Endothelial cell of umbilical vein (primary cell): ENCODE measurements at regions of chr14 and their contacts with region 1.

Region 1: DNA sequence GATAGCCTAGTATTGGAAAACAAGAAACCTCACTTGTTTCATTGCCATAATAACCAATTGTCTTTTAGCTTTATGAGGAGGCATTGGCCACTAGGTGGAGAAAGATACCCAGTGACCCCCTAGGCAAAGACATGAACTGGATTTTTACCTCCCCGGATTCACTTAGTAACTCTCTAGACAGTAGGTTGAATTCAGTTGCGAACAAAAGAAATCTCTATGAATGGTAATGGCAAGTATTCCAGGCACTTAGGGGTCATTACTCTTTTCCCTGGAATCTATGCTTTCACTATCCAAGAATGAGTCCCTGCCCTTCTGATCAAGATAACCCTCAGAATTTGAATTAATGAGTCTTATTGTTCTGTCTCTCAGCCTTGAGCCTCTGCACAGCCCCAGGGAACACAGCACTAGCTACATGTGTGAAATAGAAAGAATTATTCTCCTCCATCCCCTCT is 29.5 kb upstream of the RHOJ start:
- DNase-seq: peak; percentile 96
- H3K4me3 ChIP-seq: peak overlapping the region in 1 of 3 experiments; percentile 45
- H3K27ac ChIP-seq: peak overlapping the region; percentile 72
- H3K4me1 ChIP-seq: peaks cover 29% of the 10 kb centered on the region
- H3K27me3 ChIP-seq: no peaks in the 10 kb centered on the region
- CTCF ChIP-seq: peak; percentile 60 to 67
- POLR2A ChIP-seq: no peak

Region 2: DNA sequence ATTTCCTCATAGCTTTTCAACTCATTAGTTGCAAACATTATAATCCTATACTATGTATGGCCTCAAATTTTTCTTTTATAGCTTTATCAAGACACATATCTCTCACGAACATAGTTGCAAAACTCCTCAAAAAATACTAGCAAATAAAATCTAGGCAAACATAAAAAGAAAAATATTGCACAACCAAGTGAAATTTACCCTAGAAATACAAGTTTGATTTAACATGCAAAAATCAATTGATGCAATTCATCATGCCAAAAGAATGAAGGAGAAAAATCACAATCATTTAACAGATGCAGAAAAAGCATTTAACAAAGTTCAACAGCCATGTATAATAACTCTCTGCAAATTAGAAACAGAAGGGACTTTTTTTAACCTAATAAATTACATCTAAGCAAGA is 96.2 kb before region 1 on chr14:
- CTCF ChIA-PET with region 1: no interaction called
- POLR2A ChIA-PET with region 1: no interaction called
- dilution Hi-C with region 1: no loop called
- intact Hi-C with region 1: no loop called
- DNase-seq: no peak
- H3K4me3 ChIP-seq: no peak overlapping the region
- H3K27ac ChIP-seq: no peak overlapping the region
- H3K4me1 ChIP-seq: no peaks in the 10 kb centered on the region
- H3K27me3 ChIP-seq: peaks cover 0 to 3% of the 10 kb centered on the region in 2 experiments
- CTCF ChIP-seq: no peak
- POLR2A ChIP-seq: no peak

Region 3: DNA sequence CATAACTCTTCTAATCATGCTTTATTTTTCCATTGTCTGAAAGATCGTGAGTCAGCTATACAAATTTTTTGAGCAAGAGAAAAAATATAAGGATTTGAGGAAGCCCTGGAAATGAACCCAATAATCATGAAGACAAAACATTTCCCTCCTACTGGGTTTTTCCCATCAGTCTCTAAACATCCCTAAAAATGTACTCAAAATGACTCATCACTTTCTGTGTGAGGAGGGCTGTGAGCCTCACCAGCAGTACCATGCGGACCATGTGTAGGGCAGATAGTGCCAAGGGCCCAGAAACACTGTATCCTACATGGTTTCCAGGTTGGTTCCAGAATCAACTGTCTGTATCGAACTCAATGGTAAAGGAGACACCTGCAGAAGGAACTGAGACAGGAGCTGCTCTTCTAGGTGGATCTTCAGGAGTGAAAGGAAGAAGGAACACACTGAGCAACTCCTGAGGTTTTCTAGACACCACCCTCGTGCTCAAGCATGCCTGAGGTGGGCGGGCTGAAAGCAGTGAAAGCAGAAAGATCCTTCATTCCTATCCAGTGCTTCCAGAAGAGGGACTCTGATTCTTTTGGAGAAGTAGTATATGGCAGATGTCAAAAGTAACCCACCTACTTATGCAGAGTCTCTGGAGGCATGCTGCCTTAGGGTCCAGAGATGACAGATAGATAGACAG is 19.1 kb before region 1 on chr14:
- CTCF ChIA-PET with region 1: interaction called, 11 read pairs
- POLR2A ChIA-PET with region 1: no interaction called
- dilution Hi-C with region 1: no loop called
- intact Hi-C with region 1: no loop called
- DNase-seq: peak; percentile 96
- H3K4me3 ChIP-seq: no peak overlapping the region
- H3K27ac ChIP-seq: peak overlapping the region; percentile 62
- H3K4me1 ChIP-seq: peaks cover 16% of the 10 kb centered on the region
- H3K27me3 ChIP-seq: no peaks in the 10 kb centered on the region
- CTCF ChIP-seq: no peak
- POLR2A ChIP-seq: no peak

Region 4: GRCh38 chr14:63203618-63204406 is 29.0 kb after region 1 on chr14:
- CTCF ChIA-PET with region 1: interaction called, 66 read pairs
- POLR2A ChIA-PET with region 1: interaction called, 14 read pairs
- dilution Hi-C with region 1: no loop called
- intact Hi-C with region 1: loop called (anchors 1 kb)
- DNase-seq: peak; percentile 100
- H3K4me3 ChIP-seq: peak overlapping the region; percentile 65 to 100 (median 80)
- H3K27ac ChIP-seq: peak overlapping the region; percentile 100
- H3K4me1 ChIP-seq: peaks cover 36% of the 10 kb centered on the region
- H3K27me3 ChIP-seq: no peaks in the 10 kb centered on the region
- CTCF ChIP-seq: peak; percentile 25 to 47
- POLR2A ChIP-seq: no peak

Region 5: DNA sequence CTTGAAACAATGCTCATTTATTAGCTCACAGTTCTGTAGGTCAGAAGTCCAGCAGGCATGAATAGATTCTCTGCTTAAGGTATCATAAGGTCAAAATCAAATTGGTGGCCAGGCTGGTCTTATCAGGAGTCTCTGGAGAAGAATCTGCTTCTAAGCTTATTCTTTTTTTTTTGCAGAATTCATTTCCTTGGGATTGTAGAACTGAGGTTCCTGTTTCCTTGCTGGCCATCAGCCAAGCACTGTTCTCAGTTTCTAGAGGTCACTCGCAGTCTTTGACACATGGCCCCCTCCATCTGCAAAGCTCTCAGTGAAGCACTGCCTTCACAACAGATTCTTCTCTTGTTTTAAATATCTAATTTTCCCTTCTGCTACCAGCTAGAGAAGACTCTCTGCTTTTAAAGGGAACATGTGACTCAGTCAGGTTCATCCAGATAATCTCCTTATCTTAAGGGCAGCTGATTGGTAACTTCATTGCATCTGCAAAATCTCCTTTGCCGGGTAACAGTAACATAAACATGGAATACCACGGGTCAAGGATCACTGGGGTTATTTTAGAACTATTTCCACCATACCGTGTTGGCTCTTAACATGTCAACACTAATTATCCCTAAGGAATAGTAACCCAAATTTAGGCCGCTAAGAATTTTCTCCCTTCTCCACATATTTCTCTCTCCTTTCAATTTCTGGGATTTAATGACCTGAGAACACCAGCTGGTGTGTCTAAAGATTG is 54.7 kb after region 1 on chr14:
- CTCF ChIA-PET with region 1: interaction called, 12 read pairs
- POLR2A ChIA-PET with region 1: no interaction called
- dilution Hi-C with region 1: no loop called
- intact Hi-C with region 1: no loop called
- DNase-seq: peak; percentile 88
- H3K4me3 ChIP-seq: no peak overlapping the region
- H3K27ac ChIP-seq: no peak overlapping the region
- H3K4me1 ChIP-seq: peaks cover 46% of the 10 kb centered on the region
- H3K27me3 ChIP-seq: no peaks in the 10 kb centered on the region
- CTCF ChIP-seq: no peak
- POLR2A ChIP-seq: no peak

Region 6: DNA sequence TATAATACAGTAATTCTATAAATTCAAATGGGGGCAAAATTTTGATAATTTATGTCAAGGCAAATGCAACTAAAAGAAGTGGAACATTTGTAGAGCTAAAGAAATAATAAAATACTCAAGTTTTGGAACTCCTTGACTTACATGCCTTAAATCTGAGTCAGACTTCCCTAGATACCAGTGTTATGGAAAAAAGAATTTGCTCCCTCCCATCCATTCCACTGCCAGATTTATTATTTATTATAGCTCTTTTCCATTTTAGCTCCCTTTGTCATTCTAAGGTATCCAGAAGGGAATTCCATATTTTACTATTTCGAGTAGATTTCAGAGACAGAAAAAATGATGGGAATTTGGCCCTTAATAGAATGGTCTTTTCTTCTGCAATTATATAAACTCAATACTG is 73.4 kb after region 1 on chr14:
- CTCF ChIA-PET with region 1: interaction called, 20 read pairs
- POLR2A ChIA-PET with region 1: no interaction called
- dilution Hi-C with region 1: no loop called
- intact Hi-C with region 1: no loop called
- DNase-seq: peak; percentile 84
- H3K4me3 ChIP-seq: no peak overlapping the region
- H3K27ac ChIP-seq: peak overlapping the region; percentile 58
- H3K4me1 ChIP-seq: peaks cover 20% of the 10 kb centered on the region
- H3K27me3 ChIP-seq: no peaks in the 10 kb centered on the region
- CTCF ChIP-seq: no peak
- POLR2A ChIP-seq: no peak

Region 7: DNA sequence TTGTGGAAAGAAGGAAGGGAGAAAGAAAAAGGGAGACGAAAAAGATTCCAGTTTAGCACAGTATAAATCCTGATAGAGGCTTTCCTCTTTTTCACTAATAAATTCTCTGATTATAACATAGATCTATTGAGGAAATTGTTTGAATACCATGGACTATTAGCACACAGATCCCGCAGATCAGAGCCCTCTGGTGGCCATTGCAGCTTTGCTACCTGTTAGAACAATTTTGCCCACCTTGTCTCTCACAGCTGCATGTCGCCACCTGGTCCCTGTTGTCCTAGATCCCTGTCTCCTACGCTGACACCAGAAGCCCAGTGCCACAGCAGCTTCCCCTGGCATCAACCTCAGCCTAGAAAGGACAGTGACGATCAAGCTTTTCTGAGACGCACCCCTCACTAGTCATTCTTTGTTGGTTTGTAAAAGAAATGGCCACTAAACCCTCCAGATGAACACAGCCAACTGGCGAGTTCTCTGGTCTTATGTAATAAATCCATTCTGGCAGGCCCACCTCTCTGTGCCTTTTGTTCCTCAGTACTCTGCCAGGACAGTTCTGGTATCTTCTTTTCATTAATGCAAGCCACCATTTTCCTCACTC is 134.0 kb after region 1 on chr14:
- CTCF ChIA-PET with region 1: interaction called, 35 read pairs
- POLR2A ChIA-PET with region 1: no interaction called
- dilution Hi-C with region 1: no loop called
- intact Hi-C with region 1: loop called (anchors 1 kb)
- DNase-seq: peak; percentile 57
- H3K4me3 ChIP-seq: no peak overlapping the region
- H3K27ac ChIP-seq: no peak overlapping the region
- H3K4me1 ChIP-seq: no peaks in the 10 kb centered on the region
- H3K27me3 ChIP-seq: peaks cover 6 to 16% of the 10 kb centered on the region in 2 experiments
- CTCF ChIP-seq: peak; percentile 64 to 74
- POLR2A ChIP-seq: no peak